Endothelial cell of umbilical vein (primary cell): ENCODE measurements at regions of chr14 and their contacts with region 1.

Region 1: GRCh38 chr14:33792720-33793368 is 158.0 kb downstream of the EGLN3 start:
- DNase-seq: peak; percentile 80
- H3K4me3 ChIP-seq: peak overlapping the region in 1 of 3 experiments; percentile 30
- H3K27ac ChIP-seq: no peak overlapping the region
- H3K4me1 ChIP-seq: peaks cover 25% of the 10 kb centered on the region
- H3K27me3 ChIP-seq: no peaks in the 10 kb centered on the region
- CTCF ChIP-seq: peak; percentile 89 to 91
- POLR2A ChIP-seq: no peak

Region 2: GRCh38 chr14:32576088-32576795 is 1216.6 kb before region 1 on chr14:
- CTCF ChIA-PET with region 1: interaction called, 8 read pairs
- POLR2A ChIA-PET with region 1: no interaction called
- dilution Hi-C with region 1: no loop called
- intact Hi-C with region 1: loop called (anchors 1 kb)
- DNase-seq: peak; percentile 57
- H3K4me3 ChIP-seq: no peak overlapping the region
- H3K27ac ChIP-seq: no peak overlapping the region
- H3K4me1 ChIP-seq: no peaks in the 10 kb centered on the region
- H3K27me3 ChIP-seq: peaks cover 20 to 41% of the 10 kb centered on the region in 2 experiments
- CTCF ChIP-seq: peak; percentile 87 to 92
- POLR2A ChIP-seq: no peak

Region 3: GRCh38 chr14:32939254-32940065 is 853.4 kb before region 1 on chr14:
- CTCF ChIA-PET with region 1: no interaction called
- POLR2A ChIA-PET with region 1: no interaction called
- dilution Hi-C with region 1: no loop called
- intact Hi-C with region 1: loop called (anchors 10 kb)
- DNase-seq: peak; percentile 68
- H3K4me3 ChIP-seq: peak overlapping the region; percentile 20 to 56 (median 56)
- H3K27ac ChIP-seq: peak overlapping the region; percentile 44
- H3K4me1 ChIP-seq: peaks cover 8% of the 10 kb centered on the region
- H3K27me3 ChIP-seq: peaks cover 31 to 46% of the 10 kb centered on the region in 2 experiments
- CTCF ChIP-seq: no peak
- POLR2A ChIP-seq: no peak

Region 4: DNA sequence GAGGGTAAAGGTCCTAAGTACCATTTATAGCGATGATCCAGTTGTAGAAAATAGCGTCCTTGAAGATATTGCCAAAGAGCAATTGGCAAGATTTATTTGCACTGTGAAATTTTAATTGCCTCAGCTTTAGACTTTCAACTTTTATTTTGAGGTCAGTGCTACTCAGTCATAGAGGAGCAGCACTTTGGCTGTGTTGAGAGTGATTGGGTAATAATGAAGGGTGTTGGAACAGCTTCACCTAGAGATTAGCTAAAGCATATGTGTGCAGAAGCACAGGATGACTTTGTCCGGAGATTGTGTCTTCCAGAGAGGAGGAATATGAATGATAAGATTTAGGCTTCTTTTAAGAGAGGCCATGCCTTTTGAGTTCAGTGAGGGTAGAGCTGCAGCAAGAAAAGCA is 689.4 kb before region 1 on chr14:
- CTCF ChIA-PET with region 1: no interaction called
- POLR2A ChIA-PET with region 1: no interaction called
- dilution Hi-C with region 1: no loop called
- intact Hi-C with region 1: no loop called
- DNase-seq: no peak
- H3K4me3 ChIP-seq: no peak overlapping the region
- H3K27ac ChIP-seq: no peak overlapping the region
- H3K4me1 ChIP-seq: no peaks in the 10 kb centered on the region
- H3K27me3 ChIP-seq: no peaks in the 10 kb centered on the region
- CTCF ChIP-seq: no peak
- POLR2A ChIP-seq: no peak

Region 5: GRCh38 chr14:33432407-33433023 is 360.3 kb before region 1 on chr14:
- CTCF ChIA-PET with region 1: interaction called, 27 read pairs
- POLR2A ChIA-PET with region 1: no interaction called
- dilution Hi-C with region 1: no loop called
- intact Hi-C with region 1: loop called (anchors 2 kb)
- DNase-seq: peak; percentile 43
- H3K4me3 ChIP-seq: no peak overlapping the region
- H3K27ac ChIP-seq: no peak overlapping the region
- H3K4me1 ChIP-seq: no peaks in the 10 kb centered on the region
- H3K27me3 ChIP-seq: no peaks in the 10 kb centered on the region
- CTCF ChIP-seq: peak; percentile 17 to 33
- POLR2A ChIP-seq: no peak

Region 6: GRCh38 chr14:33475623-33476022 is 317.2 kb before region 1 on chr14:
- CTCF ChIA-PET with region 1: interaction called, 128 read pairs
- POLR2A ChIA-PET with region 1: interaction called, 5 read pairs
- dilution Hi-C with region 1: loop called (anchors 25 kb)
- intact Hi-C with region 1: loop called (anchors 1 kb)
- DNase-seq: peak; percentile 88
- H3K4me3 ChIP-seq: no peak overlapping the region
- H3K27ac ChIP-seq: no peak overlapping the region
- H3K4me1 ChIP-seq: peaks cover 8% of the 10 kb centered on the region
- H3K27me3 ChIP-seq: no peaks in the 10 kb centered on the region
- CTCF ChIP-seq: peak; percentile 60 to 74
- POLR2A ChIP-seq: no peak

Region 7: DNA sequence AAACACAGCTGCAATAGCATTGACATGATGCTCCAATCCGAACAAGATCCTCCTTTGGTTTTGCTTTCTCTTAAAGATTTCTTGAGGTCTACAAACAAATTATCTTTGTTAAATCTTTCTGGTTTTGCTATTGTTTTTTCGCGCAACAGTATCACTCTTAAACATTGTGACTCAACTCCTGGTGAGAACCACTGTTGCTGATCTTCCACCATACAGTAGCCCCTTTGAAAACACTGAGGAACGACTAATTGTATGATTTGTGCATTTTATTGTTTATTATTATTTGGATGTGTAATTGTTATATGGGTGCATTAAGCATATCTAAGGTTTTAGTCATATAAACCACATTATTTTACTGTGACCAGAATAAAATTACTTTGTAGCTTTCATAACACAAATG is 124.8 kb before region 1 on chr14:
- CTCF ChIA-PET with region 1: interaction called, 59 read pairs
- POLR2A ChIA-PET with region 1: no interaction called
- dilution Hi-C with region 1: loop called (anchors 25 kb)
- intact Hi-C with region 1: no loop called
- DNase-seq: no peak
- H3K4me3 ChIP-seq: no peak overlapping the region
- H3K27ac ChIP-seq: no peak overlapping the region
- H3K4me1 ChIP-seq: no peaks in the 10 kb centered on the region
- H3K27me3 ChIP-seq: no peaks in the 10 kb centered on the region
- CTCF ChIP-seq: no peak
- POLR2A ChIP-seq: no peak

Region 8: GRCh38 chr14:34425095-34425851 is 632.4 kb after region 1 on chr14:
- CTCF ChIA-PET with region 1: no interaction called
- POLR2A ChIA-PET with region 1: no interaction called
- dilution Hi-C with region 1: no loop called
- intact Hi-C with region 1: no loop called
- DNase-seq: no peak
- H3K4me3 ChIP-seq: no peak overlapping the region
- H3K27ac ChIP-seq: no peak overlapping the region
- H3K4me1 ChIP-seq: no peaks in the 10 kb centered on the region
- H3K27me3 ChIP-seq: peaks cover 4% of the 10 kb centered on the region in 2 experiments
- CTCF ChIP-seq: no peak
- POLR2A ChIP-seq: no peak